Naive thymus-derived CD4-positive, alpha-beta T cell (primary cell): ENCODE measurements at regions of chr14 and their contacts with region 1.

Region 1: GRCh38 chr14:55339770-55340169 is 68.5 kb downstream of the FBXO34 start:
- DNase-seq: peak in 1 of 9 donors; percentile 48
- ATAC-seq: no peak
- H3K4me3 ChIP-seq: no peak overlapping the region
- H3K4me3 Mint-ChIP-seq: peak overlapping the region in 2 of 10 donors; percentile 15 to 44
- H3K27ac ChIP-seq: no peak overlapping the region
- H3K27ac Mint-ChIP-seq: peak overlapping the region in 5 of 9 donors; percentile 24 to 48 (median 33)
- H3K4me1 ChIP-seq: peaks cover 51 to 53% of the 10 kb centered on the region in 2 donors
- H3K4me1 Mint-ChIP-seq: peaks cover 39 to 89% (median 66%) of the 10 kb centered on the region in 7 donors
- H3K27me3 ChIP-seq: no peaks in the 10 kb centered on the region
- H3K27me3 Mint-ChIP-seq: no peaks in the 10 kb centered on the region

Region 2: GRCh38 chr14:54450535-54450934 is 889.2 kb before region 1 on chr14:
- CTCF ChIA-PET with region 1: no interaction called
- POLR2A ChIA-PET with region 1: no interaction called
- intact Hi-C with region 1: no loop called
- DNase-seq: no peak
- ATAC-seq: peak; percentile 80
- H3K4me3 ChIP-seq: no peak overlapping the region
- H3K4me3 Mint-ChIP-seq: no peak overlapping the region
- H3K27ac ChIP-seq: no peak overlapping the region
- H3K27ac Mint-ChIP-seq: no peak overlapping the region
- H3K4me1 ChIP-seq: no peaks in the 10 kb centered on the region
- H3K4me1 Mint-ChIP-seq: peaks cover 0 to 5% (median 0%) of the 10 kb centered on the region in 7 donors
- H3K27me3 ChIP-seq: no peaks in the 10 kb centered on the region
- H3K27me3 Mint-ChIP-seq: peaks cover 0 to 12% (median 4%) of the 10 kb centered on the region in 5 donors

Region 3: DNA sequence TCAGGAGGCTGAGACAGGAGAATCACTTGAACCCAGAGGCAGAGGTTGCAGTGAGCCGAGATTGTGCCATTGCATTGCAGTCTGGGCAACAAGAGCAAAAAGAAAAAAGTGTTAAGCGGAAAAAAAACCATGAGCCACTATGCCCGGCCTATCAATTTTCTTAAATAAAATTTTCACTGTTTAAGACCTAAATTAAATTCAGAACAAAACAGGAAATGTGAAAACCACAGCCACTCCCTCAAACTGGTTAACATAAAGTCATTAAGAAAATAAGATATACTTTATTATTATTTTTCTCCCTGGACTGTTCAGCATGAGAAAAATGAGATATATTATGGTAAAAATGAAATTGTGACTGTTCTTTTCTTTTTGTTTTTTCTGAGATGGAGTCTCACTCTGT is 392.5 kb before region 1 on chr14:
- CTCF ChIA-PET with region 1: no interaction called
- POLR2A ChIA-PET with region 1: no interaction called
- intact Hi-C with region 1: no loop called
- DNase-seq: peak in 2 of 9 donors; percentile 2 to 9
- ATAC-seq: no peak
- H3K4me3 ChIP-seq: no peak overlapping the region
- H3K4me3 Mint-ChIP-seq: peak overlapping the region in 1 of 10 donors; percentile 39
- H3K27ac ChIP-seq: no peak overlapping the region
- H3K27ac Mint-ChIP-seq: peak overlapping the region in 1 of 9 donors; percentile 42
- H3K4me1 ChIP-seq: peaks cover 0 to 9% of the 10 kb centered on the region in 2 donors
- H3K4me1 Mint-ChIP-seq: peaks cover 0 to 12% (median 8%) of the 10 kb centered on the region in 7 donors
- H3K27me3 ChIP-seq: no peaks in the 10 kb centered on the region
- H3K27me3 Mint-ChIP-seq: no peaks in the 10 kb centered on the region

Region 4: DNA sequence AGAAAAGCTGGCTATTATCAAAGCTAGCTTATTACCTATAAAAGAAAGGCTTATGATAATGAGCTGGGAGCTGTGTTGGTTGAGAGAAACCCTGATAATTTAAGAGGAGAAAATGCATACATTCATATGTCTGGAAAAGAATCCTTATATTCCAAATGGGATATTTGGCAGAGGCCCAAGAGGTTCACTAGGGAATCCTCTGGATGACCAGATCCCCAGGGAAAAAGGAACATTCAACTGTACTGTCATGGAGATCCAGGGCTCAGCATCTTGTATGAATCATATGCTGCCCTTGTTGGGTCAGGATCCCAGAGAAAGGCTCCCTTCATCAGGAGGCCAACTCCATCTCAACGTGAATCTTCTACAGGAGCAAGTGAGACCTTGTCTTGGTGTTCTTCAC is 85.2 kb before region 1 on chr14:
- CTCF ChIA-PET with region 1: no interaction called
- POLR2A ChIA-PET with region 1: no interaction called
- intact Hi-C with region 1: no loop called
- DNase-seq: no peak
- ATAC-seq: no peak
- H3K4me3 ChIP-seq: no peak overlapping the region
- H3K4me3 Mint-ChIP-seq: no peak overlapping the region
- H3K27ac ChIP-seq: no peak overlapping the region
- H3K27ac Mint-ChIP-seq: no peak overlapping the region
- H3K4me1 ChIP-seq: no peaks in the 10 kb centered on the region
- H3K4me1 Mint-ChIP-seq: peaks cover 0 to 2% (median 0%) of the 10 kb centered on the region in 7 donors
- H3K27me3 ChIP-seq: no peaks in the 10 kb centered on the region
- H3K27me3 Mint-ChIP-seq: peaks cover 0 to 30% (median 8%) of the 10 kb centered on the region in 5 donors

Region 5: GRCh38 chr14:55301437-55302121 is 38.2 kb before region 1 on chr14:
- CTCF ChIA-PET with region 1: no interaction called
- POLR2A ChIA-PET with region 1: no interaction called
- intact Hi-C with region 1: loop called in 1 of 2 experiments (anchors 5 kb)
- DNase-seq: no peak
- ATAC-seq: peak; percentile 12
- H3K4me3 ChIP-seq: no peak overlapping the region
- H3K4me3 Mint-ChIP-seq: peak overlapping the region in 1 of 10 donors; percentile 8
- H3K27ac ChIP-seq: no peak overlapping the region
- H3K27ac Mint-ChIP-seq: peak overlapping the region in 1 of 9 donors; percentile 52
- H3K4me1 ChIP-seq: peaks cover 6% of the 10 kb centered on the region in 2 donors
- H3K4me1 Mint-ChIP-seq: peaks cover 29 to 69% (median 63%) of the 10 kb centered on the region in 7 donors
- H3K27me3 ChIP-seq: no peaks in the 10 kb centered on the region
- H3K27me3 Mint-ChIP-seq: no peaks in the 10 kb centered on the region